ENCODE measurements at regions of chr13 and their contacts with region 1.

Region 1: GRCh38 chr13:67090856-67091255 is 139.3 kb downstream of the PCDH9 start:
- DNase-seq: no peak
- ATAC-seq: no peak
- H3K4me3 ChIP-seq: no peak overlapping the region
- H3K27ac ChIP-seq: no peak overlapping the region
- H3K4me1 ChIP-seq: peaks cover 0 to 34% (median 4%) of the 10 kb centered on the region in 12 donors
- H3K27me3 ChIP-seq: no peaks in the 10 kb centered on the region
- CTCF ChIP-seq: no peak
- POLR2A ChIP-seq: no peak

Region 2: GRCh38 chr13:67128136-67128535 is 37.3 kb after region 1 on chr13:
- intact Hi-C with region 1: loop called in 5 of 10 experiments (anchors 5 to 10 kb)
- DNase-seq: no peak
- ATAC-seq: no peak
- H3K4me3 ChIP-seq: no peak overlapping the region
- H3K27ac ChIP-seq: no peak overlapping the region
- H3K4me1 ChIP-seq: peaks cover 0 to 5% (median 0%) of the 10 kb centered on the region in 12 donors
- H3K27me3 ChIP-seq: no peaks in the 10 kb centered on the region
- CTCF ChIP-seq: no peak
- POLR2A ChIP-seq: no peak

Region 3: DNA sequence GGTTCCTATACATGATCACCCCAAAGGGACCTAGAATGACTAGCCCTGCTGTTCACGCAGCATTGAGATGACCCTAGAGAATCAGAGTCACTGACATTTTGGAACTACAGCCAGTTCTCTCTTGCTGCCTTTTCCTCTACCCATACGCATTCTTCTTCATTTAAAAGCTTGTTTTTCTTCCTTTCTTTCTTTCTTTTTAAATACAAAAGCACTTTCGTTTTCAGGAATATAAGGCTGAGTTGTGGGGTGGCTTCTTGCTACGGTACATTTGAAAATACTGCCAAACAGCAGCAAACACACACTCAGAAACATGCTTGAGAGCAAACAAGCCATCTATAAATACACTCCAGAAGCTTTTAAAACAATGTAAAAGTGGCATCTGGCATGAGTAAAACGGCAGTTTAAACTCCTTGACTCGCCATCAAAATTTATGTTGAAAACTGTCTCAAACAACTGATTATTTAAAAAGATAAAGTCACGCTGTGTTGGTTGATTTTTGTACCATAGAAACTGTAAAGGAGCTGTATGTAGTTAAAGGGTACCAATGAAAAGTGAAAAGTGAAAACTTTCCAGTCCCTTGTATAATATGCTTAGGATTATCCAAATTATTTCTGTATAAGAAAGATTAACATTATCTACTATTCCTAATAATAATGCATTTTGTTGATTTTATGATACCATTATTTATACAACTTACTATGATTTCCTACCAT is 43.7 kb after region 1 on chr13:
- intact Hi-C with region 1: loop called in 5 of 10 experiments (anchors 5 to 10 kb)
- DNase-seq: no peak
- ATAC-seq: peak in 2 of 4 donors; percentile 58 to 72
- H3K4me3 ChIP-seq: peak overlapping the region in 9 of 12 donors; percentile 15 to 48 (median 34)
- H3K27ac ChIP-seq: peak overlapping the region; percentile 47 to 79 (median 71)
- H3K4me1 ChIP-seq: peaks cover 0 to 30% (median 12%) of the 10 kb centered on the region in 12 donors
- H3K27me3 ChIP-seq: no peaks in the 10 kb centered on the region
- CTCF ChIP-seq: no peak
- POLR2A ChIP-seq: no peak

Region 4: GRCh38 chr13:67147342-67148133 is 56.7 kb after region 1 on chr13:
- intact Hi-C with region 1: loop called in 2 of 10 experiments (anchors 2 to 5 kb)
- DNase-seq: peak in 1 of 5 donors; percentile 31
- ATAC-seq: peak; percentile 85 to 94 (median 90)
- H3K4me3 ChIP-seq: peak overlapping the region in 8 of 12 donors; percentile 2 to 40 (median 22)
- H3K27ac ChIP-seq: peak overlapping the region; percentile 27 to 91 (median 80)
- H3K4me1 ChIP-seq: peaks cover 0 to 49% (median 26%) of the 10 kb centered on the region in 12 donors
- H3K27me3 ChIP-seq: no peaks in the 10 kb centered on the region
- CTCF ChIP-seq: no peak
- POLR2A ChIP-seq: no peak

Region 5: GRCh38 chr13:68509734-68510621 is 1419.1 kb after region 1 on chr13:
- intact Hi-C with region 1: no loop called
- DNase-seq: no peak
- ATAC-seq: no peak
- H3K4me3 ChIP-seq: no peak overlapping the region
- H3K27ac ChIP-seq: no peak overlapping the region
- H3K4me1 ChIP-seq: no peaks in the 10 kb centered on the region
- H3K27me3 ChIP-seq: no peaks in the 10 kb centered on the region
- CTCF ChIP-seq: no peak
- POLR2A ChIP-seq: no peak